ENCODE measurements at regions of chr5 and their contacts with region 1.

Region 1: DNA sequence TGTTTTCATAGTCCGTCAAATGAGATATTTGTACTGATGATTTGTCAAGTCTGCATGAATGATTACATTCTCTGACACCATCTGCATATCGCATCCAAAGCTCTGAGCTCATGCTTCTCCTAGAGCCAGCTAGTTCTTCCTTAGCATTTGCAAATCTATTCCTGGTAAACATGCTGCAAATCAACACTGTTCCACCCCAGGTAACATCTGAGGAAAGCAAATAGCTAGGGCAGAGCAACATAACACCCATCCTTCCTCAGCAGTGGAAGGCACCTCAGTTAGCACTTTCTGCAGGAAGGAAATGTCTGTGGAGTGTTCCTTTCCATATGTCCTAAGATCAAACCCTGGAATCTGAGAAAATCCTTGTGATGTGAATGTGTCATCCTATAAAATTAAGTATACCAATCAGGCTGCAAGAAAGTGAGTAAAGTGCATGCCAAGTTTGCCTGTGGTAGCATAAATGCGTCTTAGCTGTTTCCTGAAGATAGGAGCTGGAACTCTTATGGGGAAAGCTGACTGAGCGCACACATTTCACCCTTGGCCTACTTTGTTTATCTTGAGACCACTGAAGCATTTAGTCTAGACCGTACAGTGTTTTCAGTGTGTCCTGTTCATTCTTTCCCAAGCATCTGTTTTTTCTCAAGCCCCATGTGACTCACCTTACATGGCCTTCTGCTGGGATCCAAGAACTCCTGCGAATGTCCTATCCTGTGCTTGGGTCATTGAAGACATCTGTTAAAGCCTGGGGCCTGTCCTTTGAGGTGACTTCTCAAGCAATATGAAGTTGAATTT is 50.9 kb upstream of the STARD4 start:
- DNase-seq: no peak
- H3K4me3 ChIP-seq: no peak overlapping the region
- H3K27ac ChIP-seq: no peak overlapping the region
- H3K4me1 ChIP-seq: no peaks in the 10 kb centered on the region
- H3K27me3 ChIP-seq: no peaks in the 10 kb centered on the region
- CTCF ChIP-seq: no peak

Region 2: GRCh38 chr5:111820072-111820471 is 256.8 kb after region 1 on chr5:
- CTCF ChIA-PET with region 1: no interaction called
- POLR2A ChIA-PET with region 1: no interaction called
- intact Hi-C with region 1: no loop called
- DNase-seq: no peak
- H3K4me3 ChIP-seq: no peak overlapping the region
- H3K27ac ChIP-seq: no peak overlapping the region
- H3K4me1 ChIP-seq: no peaks in the 10 kb centered on the region
- H3K27me3 ChIP-seq: no peaks in the 10 kb centered on the region
- CTCF ChIP-seq: peak; percentile 22; the same call in 1 of the 2 replicates

Region 3: GRCh38 chr5:112136773-112137172 is 573.5 kb after region 1 on chr5:
- CTCF ChIA-PET with region 1: no interaction called
- POLR2A ChIA-PET with region 1: interaction called, 10 read pairs
- intact Hi-C with region 1: no loop called
- DNase-seq: no peak
- H3K4me3 ChIP-seq: no peak overlapping the region
- H3K27ac ChIP-seq: no peak overlapping the region
- H3K4me1 ChIP-seq: no peaks in the 10 kb centered on the region
- H3K27me3 ChIP-seq: no peaks in the 10 kb centered on the region
- CTCF ChIP-seq: no peak